Endothelial cell of umbilical vein (primary cell): ENCODE measurements at regions of chr20 and their contacts with region 1.

Region 1: GRCh38 chr20:56554869-56555268 is 21.8 kb downstream of the FAM209B start:
- DNase-seq: peak; percentile 85
- H3K4me3 ChIP-seq: no peak overlapping the region
- H3K27ac ChIP-seq: peak overlapping the region; percentile 49
- H3K4me1 ChIP-seq: peaks cover 5% of the 10 kb centered on the region
- H3K27me3 ChIP-seq: no peaks in the 10 kb centered on the region
- CTCF ChIP-seq: peak in 1 of 2 donors; percentile 3
- POLR2A ChIP-seq: no peak

Region 2: GRCh38 chr20:56259948-56260347 is 294.9 kb before region 1 on chr20:
- CTCF ChIA-PET with region 1: no interaction called
- POLR2A ChIA-PET with region 1: no interaction called
- dilution Hi-C with region 1: no loop called
- intact Hi-C with region 1: no loop called
- DNase-seq: no peak
- H3K4me3 ChIP-seq: no peak overlapping the region
- H3K27ac ChIP-seq: no peak overlapping the region
- H3K4me1 ChIP-seq: no peaks in the 10 kb centered on the region
- H3K27me3 ChIP-seq: no peaks in the 10 kb centered on the region
- CTCF ChIP-seq: no peak
- POLR2A ChIP-seq: no peak

Region 3: GRCh38 chr20:56468316-56469082 is 86.4 kb before region 1 on chr20 and contains the start of gene RTF2:
- CTCF ChIA-PET with region 1: no interaction called
- POLR2A ChIA-PET with region 1: no interaction called
- dilution Hi-C with region 1: no loop called
- intact Hi-C with region 1: loop called (anchors 1 kb)
- DNase-seq: peak; percentile 95
- H3K4me3 ChIP-seq: peak within 1 kb of the TSS; percentile 83 to 95 (median 92)
- H3K27ac ChIP-seq: peak within 1 kb of the TSS; percentile 87
- H3K4me1 ChIP-seq: peaks cover 7% of the 10 kb centered on the region
- H3K27me3 ChIP-seq: peaks cover 0 to 3% of the 10 kb centered on the region in 2 experiments
- CTCF ChIP-seq: no peak
- POLR2A ChIP-seq: peak; percentile 78
- total RNA-seq, gene RTF2: 82.2 and 84.7 TPM in 2 replicates

Region 4: DNA sequence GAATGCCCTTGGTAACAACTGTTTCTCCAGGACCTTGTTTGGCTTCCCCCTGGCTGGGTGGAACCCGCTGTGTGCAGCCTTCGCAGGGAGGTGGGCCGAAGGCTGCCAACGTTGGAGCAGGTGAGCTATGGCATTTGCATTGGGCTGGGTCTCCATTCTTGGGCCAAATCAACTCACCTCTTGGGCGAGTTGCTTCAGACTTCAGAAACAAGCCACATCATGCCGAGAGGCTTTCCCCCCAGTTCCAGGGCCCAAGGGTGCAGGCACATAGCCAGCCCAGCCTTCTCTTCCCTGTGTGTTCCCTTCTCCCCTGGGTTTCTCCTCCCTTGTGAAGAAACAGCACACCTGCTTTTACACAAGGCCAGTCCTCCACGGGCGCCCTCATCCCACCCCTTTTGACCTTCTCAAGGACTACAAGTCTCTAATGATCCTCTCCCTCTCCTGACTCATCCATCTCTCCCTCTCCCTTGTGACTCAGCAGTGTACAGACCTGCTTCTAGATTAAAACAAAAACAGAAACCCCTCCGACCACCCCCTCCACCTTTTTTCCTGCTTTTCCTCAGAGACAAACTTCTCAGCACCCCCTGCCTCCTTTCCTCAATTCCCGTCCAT is 19.8 kb after region 1 on chr20:
- CTCF ChIA-PET with region 1: interaction called, 96 read pairs
- POLR2A ChIA-PET with region 1: no interaction called
- dilution Hi-C with region 1: no loop called
- intact Hi-C with region 1: loop called (anchors 1 kb)
- DNase-seq: no peak
- H3K4me3 ChIP-seq: no peak overlapping the region
- H3K27ac ChIP-seq: no peak overlapping the region
- H3K4me1 ChIP-seq: no peaks in the 10 kb centered on the region
- H3K27me3 ChIP-seq: no peaks in the 10 kb centered on the region
- CTCF ChIP-seq: no peak
- POLR2A ChIP-seq: no peak

Region 5: GRCh38 chr20:56712141-56712540 is 157.3 kb after region 1 on chr20:
- CTCF ChIA-PET with region 1: no interaction called
- POLR2A ChIA-PET with region 1: no interaction called
- dilution Hi-C with region 1: no loop called
- intact Hi-C with region 1: no loop called
- DNase-seq: no peak
- H3K4me3 ChIP-seq: no peak overlapping the region
- H3K27ac ChIP-seq: no peak overlapping the region
- H3K4me1 ChIP-seq: no peaks in the 10 kb centered on the region
- H3K27me3 ChIP-seq: no peaks in the 10 kb centered on the region
- CTCF ChIP-seq: no peak
- POLR2A ChIP-seq: no peak

Region 6: GRCh38 chr20:56974499-56975236 is 419.8 kb after region 1 on chr20:
- CTCF ChIA-PET with region 1: interaction called, 19 read pairs
- POLR2A ChIA-PET with region 1: no interaction called
- dilution Hi-C with region 1: no loop called
- intact Hi-C with region 1: no loop called
- DNase-seq: no peak
- H3K4me3 ChIP-seq: no peak overlapping the region
- H3K27ac ChIP-seq: no peak overlapping the region
- H3K4me1 ChIP-seq: no peaks in the 10 kb centered on the region
- H3K27me3 ChIP-seq: no peaks in the 10 kb centered on the region
- CTCF ChIP-seq: peak; percentile 36 to 39
- POLR2A ChIP-seq: no peak

Region 7: DNA sequence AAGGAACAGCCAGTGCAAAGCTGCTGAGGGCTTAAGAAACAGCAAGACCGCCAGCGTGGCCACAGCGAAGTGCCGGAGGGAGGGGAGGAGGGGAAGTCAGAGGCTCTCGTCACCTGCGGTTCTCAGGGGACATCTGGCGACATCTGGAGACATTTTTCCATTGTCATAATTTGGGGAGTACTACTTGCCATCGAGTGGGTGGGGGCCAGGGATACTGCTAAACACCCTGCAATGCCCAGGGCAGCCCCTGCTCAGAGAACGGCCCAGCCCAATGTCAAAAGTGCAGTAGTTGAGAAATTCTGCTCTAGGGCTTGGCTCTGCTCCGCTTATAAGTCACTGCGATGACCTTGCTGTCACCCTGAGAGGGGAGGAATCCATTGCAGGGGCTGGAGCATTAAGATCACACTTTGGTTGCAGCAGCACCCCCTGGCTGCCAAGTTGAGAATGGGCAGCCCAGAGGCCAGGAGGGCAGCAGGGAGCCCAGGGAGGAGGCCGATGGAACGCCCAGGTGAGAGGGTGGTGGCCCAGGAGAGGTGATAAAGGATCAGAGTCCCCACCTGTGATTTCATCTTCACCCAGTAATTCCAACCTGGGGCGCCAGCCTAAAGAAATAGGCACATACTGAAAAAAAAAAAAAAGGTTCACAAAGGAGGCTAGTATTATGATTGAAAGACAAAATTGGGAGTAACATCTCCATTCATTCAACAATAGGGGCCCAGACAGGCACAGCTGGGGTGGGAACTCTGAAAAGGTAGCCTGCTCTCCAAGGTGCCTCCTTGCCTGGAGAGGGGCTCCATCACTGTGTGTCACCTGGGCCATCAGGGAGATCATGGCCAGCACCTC is 493.4 kb after region 1 on chr20:
- CTCF ChIA-PET with region 1: no interaction called
- POLR2A ChIA-PET with region 1: no interaction called
- dilution Hi-C with region 1: no loop called
- intact Hi-C with region 1: loop called (anchors 1 kb)
- DNase-seq: no peak
- H3K4me3 ChIP-seq: no peak overlapping the region
- H3K27ac ChIP-seq: no peak overlapping the region
- H3K4me1 ChIP-seq: no peaks in the 10 kb centered on the region
- H3K27me3 ChIP-seq: no peaks in the 10 kb centered on the region
- CTCF ChIP-seq: peak; percentile 25 to 28
- POLR2A ChIP-seq: no peak

Region 8: DNA sequence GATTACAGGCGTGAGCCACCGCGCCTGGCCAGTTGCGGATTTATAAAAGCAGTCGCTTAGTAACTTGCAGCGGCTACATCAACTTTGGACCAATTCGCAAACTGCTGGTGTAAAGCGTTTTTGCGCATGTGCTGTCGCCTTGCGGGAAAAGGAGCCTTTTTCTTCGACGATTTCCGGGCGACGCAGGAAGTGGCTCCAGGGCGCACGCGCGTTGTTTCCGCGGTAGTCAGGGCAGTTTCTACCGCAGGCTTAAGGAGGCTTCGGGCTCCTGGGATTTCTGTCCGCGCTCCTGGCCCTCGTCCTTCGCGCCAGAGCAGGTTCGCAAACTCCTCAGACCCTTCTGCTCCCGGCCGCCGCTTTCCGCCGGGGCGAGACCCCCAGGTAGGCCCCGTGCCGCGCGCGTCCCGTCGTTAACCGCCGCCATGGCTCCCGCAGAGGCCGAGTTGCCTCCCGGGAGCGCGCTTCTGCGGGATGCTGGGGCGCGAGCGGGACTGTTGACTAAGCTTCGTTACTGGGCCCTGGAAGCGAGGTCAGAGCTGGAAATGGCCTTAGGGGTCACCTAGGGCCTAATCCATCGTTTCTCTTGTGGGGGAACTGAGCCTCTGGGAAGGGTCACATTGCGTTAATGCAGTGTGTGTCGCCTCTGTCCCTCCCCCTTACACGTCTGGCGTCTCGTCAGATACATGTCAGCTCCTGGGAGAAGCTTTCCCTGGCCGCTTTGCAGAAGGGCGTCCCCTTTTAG is 796.3 kb after region 1 on chr20 and contains the start of gene RAE1:
- CTCF ChIA-PET with region 1: interaction called, 43 read pairs
- POLR2A ChIA-PET with region 1: no interaction called
- dilution Hi-C with region 1: no loop called
- intact Hi-C with region 1: loop called (anchors 1 kb)
- DNase-seq: peak; percentile 93
- H3K4me3 ChIP-seq: peak within 1 kb of the TSS; percentile 64 to 79 (median 72)
- H3K27ac ChIP-seq: peak within 1 kb of the TSS; percentile 80
- H3K4me1 ChIP-seq: peaks cover 9% of the 10 kb centered on the region
- H3K27me3 ChIP-seq: no peaks in the 10 kb centered on the region
- CTCF ChIP-seq: no peak
- POLR2A ChIP-seq: peak; percentile 85
- total RNA-seq, gene RAE1: 34.1 and 37.1 TPM in 2 replicates